ENCODE measurements at regions of chr1 and their contacts with region 1.

Region 1: GRCh38 chr1:20640183-20640597 is 6.9 kb downstream of the PINK1 start:
- DNase-seq: peak; percentile 39
- ATAC-seq: peak; percentile 76
- H3K4me3 ChIP-seq: no peak overlapping the region
- H3K27ac ChIP-seq: no peak overlapping the region
- H3K4me1 ChIP-seq: no peaks in the 10 kb centered on the region
- H3K27me3 ChIP-seq: no peaks in the 10 kb centered on the region
- CTCF ChIP-seq: peak; percentile 80
- EP300 ChIP-seq: no peak
- POLR2A ChIP-seq: no peak
- RAD21 ChIP-seq: peak; percentile 80

Region 2: DNA sequence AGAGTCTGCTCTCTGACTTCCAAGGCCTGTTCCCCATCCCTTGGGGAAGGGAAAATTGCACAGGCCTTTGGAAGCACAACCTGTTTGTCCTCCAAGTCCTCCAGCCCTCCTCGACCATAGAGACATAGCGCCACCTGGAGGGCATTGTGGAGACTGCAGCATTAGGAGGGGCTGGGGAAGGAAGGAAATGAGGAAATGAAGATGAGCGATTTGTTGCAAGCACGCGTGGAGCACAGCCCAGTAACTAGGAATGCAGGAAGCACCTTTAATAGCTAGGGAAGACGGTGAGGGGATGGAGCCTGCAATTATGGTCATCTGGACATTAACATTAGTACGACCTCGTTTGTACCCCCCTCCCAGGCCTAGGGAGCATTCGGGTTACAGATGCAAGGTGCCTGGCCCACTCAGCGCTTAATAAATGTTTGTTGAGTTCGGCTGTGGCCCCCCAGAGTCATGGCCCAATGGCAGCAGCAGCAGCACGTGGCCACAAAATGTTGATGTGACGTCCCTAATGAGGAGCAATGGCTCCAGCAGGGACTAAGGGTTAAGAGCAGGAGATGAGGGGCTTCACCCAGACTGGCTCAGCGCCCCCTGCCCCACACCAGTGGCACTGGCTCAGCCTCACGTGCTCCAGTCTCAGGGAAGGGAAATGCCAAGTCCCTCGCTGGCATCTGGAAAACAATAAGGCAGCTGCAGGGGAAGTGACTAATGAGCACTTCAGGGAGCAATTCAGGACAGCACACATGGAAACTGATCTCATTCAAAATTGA is 146.2 kb before region 1 on chr1:
- CTCF ChIA-PET with region 1: no interaction called
- POLR2A ChIA-PET with region 1: no interaction called
- in situ Hi-C with region 1: no loop called
- intact Hi-C with region 1: no loop called
- DNase-seq: peak; percentile 79
- ATAC-seq: peak; percentile 74
- H3K4me3 ChIP-seq: peak overlapping the region in 2 of 3 experiments; percentile 34 to 49; a peak in 3 of 6 replicates
- H3K27ac ChIP-seq: no peak overlapping the region
- H3K4me1 ChIP-seq: peaks cover 57% of the 10 kb centered on the region
- H3K27me3 ChIP-seq: peaks cover 0 to 10% of the 10 kb centered on the region in 2 experiments; a peak in 4 of 5 replicates
- CTCF ChIP-seq: peak; percentile 99
- EP300 ChIP-seq: no peak
- POLR2A ChIP-seq: no peak
- RAD21 ChIP-seq: peak; percentile 98

Region 3: DNA sequence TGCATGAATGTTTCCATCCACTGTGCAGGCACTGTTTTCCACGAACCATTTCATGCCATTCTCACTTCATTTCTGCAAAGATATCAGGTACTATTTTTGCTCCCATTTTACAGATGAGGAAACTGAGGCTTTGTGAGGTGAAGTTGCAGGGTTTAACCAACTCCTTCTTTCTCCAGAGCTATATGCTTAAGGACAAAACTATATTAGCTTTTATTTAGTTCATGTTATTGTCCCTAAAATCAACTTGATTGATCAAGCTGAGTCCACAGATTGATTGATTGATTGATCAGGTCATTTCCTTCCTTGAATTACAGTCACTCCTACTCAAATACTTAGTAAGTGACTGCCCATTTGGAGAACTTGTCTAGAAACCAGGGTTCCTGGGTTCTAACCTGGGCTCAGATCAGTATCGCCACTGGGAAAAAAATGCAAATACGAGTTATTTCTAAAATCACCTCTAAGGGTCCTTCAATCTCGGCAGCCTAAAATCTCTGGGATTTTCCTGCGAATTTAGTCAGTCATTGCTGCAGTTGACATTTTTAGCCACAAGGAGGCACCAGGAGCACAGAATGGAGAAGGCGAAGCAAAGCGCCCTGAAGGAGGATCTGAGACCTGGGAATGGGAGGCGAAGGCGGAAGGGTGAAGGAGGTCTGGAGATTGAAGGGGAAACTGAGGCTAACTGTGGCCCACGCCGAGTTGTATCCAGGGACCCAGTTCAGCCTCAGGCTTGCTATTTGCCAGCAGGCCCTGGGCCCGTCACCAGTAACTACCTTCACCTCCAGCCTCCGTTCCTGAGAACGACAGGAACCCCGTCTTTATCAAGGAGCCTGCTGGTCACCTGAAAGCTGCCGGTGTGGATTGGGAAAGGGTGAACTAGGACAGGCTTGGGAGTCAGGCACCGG is 118.0 kb before region 1 on chr1:
- CTCF ChIA-PET with region 1: interaction called, 33 read pairs
- POLR2A ChIA-PET with region 1: no interaction called
- in situ Hi-C with region 1: no loop called
- intact Hi-C with region 1: loop called (anchors 1 kb)
- DNase-seq: peak; percentile 57
- ATAC-seq: peak; percentile 54
- H3K4me3 ChIP-seq: no peak overlapping the region
- H3K27ac ChIP-seq: no peak overlapping the region
- H3K4me1 ChIP-seq: peaks cover 5% of the 10 kb centered on the region
- H3K27me3 ChIP-seq: 0 out of 5 replicates have a peak, but pooled peaks cover 0 to 2% of the 10 kb centered on the region in 2 experiments
- CTCF ChIP-seq: peak; percentile 93
- EP300 ChIP-seq: no peak
- POLR2A ChIP-seq: no peak
- RAD21 ChIP-seq: peak; percentile 86

Region 4: DNA sequence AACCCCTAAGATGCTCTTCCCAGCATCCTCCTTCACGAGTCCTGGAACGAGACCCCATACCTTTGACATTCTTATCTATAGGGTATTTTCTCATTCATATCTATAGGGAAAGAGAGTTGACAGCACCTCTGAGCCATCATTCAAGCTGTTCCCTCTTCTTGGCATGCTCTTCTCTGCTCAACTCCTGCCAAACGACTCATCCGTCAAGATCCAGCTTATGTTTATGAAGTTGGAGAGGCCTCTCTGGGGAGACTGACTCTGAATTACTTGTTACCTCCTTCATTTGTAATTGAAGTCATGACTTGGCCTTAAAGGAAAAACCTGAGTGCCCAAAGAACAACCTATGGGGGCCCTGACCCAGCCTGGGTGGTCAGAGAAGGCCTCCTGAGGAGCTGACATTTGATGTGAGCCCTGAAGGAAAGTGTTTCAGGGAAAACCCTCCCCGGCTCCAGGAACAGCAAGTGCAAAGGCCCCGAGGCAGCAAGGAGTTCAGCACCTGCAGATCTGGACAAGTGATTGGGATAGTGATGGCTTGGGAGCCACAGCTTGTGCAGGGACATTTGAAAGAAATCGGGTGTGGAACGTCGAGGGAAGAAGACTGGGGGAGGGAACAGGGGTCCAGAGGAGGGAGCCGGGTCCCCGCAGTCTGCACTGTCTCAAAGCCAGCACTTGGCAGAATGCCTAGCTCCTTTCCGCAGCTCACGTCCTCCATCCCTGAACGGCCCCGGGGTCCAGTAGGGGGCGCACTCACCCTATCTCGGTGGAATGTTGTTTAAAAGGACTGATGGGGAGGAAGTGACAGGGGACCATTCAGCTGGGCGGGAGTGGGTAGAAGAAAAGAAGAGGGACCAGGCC is 65.3 kb before region 1 on chr1:
- CTCF ChIA-PET with region 1: interaction called, 14 read pairs
- POLR2A ChIA-PET with region 1: no interaction called
- in situ Hi-C with region 1: loop called (anchors 5 kb)
- intact Hi-C with region 1: loop called (anchors 1 kb)
- DNase-seq: peak; percentile 75
- ATAC-seq: peak; percentile 97
- H3K4me3 ChIP-seq: no peak overlapping the region
- H3K27ac ChIP-seq: no peak overlapping the region
- H3K4me1 ChIP-seq: peaks cover 7% of the 10 kb centered on the region; the same call in 1 of the 2 replicates
- H3K27me3 ChIP-seq: no peaks in the 10 kb centered on the region; a peak in 1 of 5 replicates
- CTCF ChIP-seq: peak; percentile 90
- EP300 ChIP-seq: no peak
- POLR2A ChIP-seq: no peak
- RAD21 ChIP-seq: peak; percentile 76

Region 5: GRCh38 chr1:21439721-21440629 is 799.8 kb after region 1 on chr1 and contains the start of gene NBPF3:
- CTCF ChIA-PET with region 1: no interaction called
- POLR2A ChIA-PET with region 1: no interaction called
- in situ Hi-C with region 1: no loop called
- intact Hi-C with region 1: no loop called
- DNase-seq: peak; percentile 76
- ATAC-seq: peak; percentile 91
- H3K4me3 ChIP-seq: peak within 1 kb of the TSS; percentile 66 to 81 (median 80)
- H3K27ac ChIP-seq: peak within 1 kb of the TSS; percentile 33
- H3K4me1 ChIP-seq: peaks cover 40% of the 10 kb centered on the region
- H3K27me3 ChIP-seq: peaks cover 1 to 15% of the 10 kb centered on the region in 2 experiments
- CTCF ChIP-seq: 0 out of 2 replicates have a peak, but pooled peaks have one; percentile 13
- EP300 ChIP-seq: no peak
- POLR2A ChIP-seq: peak; percentile 35 to 83; a peak in 2 of 4 replicates
- RAD21 ChIP-seq: no peak
- total RNA-seq, gene NBPF3: 4.9 and 5.8 TPM in 2 replicates

Region 6: DNA sequence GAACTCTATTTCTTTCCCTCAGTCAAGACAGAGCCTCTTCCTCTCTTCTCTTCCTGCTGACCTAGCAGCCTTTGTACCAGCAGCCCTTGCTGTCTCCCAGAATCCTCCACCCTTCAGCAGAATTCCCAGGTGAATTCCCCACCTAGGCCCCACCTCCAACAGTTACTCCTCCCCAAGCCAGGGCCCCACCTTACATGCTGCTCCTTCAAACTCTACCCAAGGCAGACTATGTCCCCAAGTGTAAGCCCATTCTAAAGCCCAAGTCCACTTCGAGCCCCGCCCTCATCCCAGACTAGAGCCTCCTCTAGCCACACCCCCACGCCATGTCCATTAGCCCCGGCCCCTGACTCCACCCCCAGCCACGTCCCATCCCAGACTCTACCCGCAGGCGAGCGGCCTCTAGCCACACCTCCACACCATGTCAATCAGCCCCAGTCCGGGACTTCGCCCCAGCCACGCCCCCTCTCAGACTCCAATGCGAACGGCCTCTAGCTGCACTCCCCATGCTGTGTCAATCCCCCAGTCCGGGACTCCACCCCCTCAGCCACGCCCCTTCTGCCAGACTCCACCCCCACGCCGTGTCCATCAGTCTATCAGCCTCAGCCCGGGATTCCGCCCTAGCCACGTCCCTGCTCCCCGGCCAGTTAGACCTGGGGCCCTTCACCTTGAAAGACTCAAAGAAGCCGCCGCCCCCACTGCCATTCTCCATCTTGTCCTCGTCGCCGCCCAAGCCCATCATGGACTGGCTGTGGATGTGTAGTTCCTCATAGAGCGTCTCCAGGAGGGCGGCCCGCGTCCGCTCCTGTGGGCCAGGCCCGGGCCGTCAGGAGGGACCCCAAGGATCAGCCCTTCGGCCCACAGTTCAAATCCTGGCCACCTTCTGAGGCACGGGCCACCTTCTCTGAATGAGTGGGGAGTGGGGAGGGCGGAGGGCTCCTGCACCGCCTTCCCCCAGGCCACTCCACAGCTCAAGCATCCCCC is 967.6 kb after region 1 on chr1:
- CTCF ChIA-PET with region 1: no interaction called
- POLR2A ChIA-PET with region 1: no interaction called
- in situ Hi-C with region 1: no loop called
- intact Hi-C with region 1: no loop called
- DNase-seq: peak; percentile 50
- ATAC-seq: peak; percentile 55
- H3K4me3 ChIP-seq: no peak overlapping the region
- H3K27ac ChIP-seq: no peak overlapping the region
- H3K4me1 ChIP-seq: no peaks in the 10 kb centered on the region
- H3K27me3 ChIP-seq: no peaks in the 10 kb centered on the region
- CTCF ChIP-seq: no peak
- EP300 ChIP-seq: no peak
- POLR2A ChIP-seq: no peak
- RAD21 ChIP-seq: no peak

Measured in HepG2 (cell line).